ENCODE measurements at regions of chr2 and their contacts with region 1.

Region 1: DNA sequence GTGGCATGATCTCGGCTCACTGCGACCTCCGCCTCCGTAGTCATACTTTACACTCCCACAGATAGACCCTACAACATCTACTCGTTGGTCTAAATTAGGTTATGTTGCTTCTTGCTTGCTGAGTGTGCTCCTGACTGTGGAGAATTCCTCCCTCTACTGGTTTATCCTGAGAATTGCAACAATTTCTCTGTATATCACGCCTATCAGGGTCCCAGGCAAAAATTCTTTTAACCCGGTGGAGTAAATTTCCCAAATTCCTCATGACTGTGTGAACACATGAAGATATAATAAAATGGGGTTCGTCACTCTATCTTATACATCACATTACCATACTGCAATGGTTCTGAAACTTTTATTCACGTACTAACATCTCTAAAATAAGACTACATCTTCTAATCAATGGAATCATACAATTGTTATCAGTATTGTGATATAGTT is 156.7 kb downstream of the EVA1A start:
- DNase-seq: no peak
- ATAC-seq: peak; percentile 55 to 72
- H3K4me3 ChIP-seq: no peak overlapping the region
- H3K27ac ChIP-seq: no peak overlapping the region
- H3K4me1 ChIP-seq: no peaks in the 10 kb centered on the region
- H3K27me3 ChIP-seq: no peaks in the 10 kb centered on the region

Region 2: DNA sequence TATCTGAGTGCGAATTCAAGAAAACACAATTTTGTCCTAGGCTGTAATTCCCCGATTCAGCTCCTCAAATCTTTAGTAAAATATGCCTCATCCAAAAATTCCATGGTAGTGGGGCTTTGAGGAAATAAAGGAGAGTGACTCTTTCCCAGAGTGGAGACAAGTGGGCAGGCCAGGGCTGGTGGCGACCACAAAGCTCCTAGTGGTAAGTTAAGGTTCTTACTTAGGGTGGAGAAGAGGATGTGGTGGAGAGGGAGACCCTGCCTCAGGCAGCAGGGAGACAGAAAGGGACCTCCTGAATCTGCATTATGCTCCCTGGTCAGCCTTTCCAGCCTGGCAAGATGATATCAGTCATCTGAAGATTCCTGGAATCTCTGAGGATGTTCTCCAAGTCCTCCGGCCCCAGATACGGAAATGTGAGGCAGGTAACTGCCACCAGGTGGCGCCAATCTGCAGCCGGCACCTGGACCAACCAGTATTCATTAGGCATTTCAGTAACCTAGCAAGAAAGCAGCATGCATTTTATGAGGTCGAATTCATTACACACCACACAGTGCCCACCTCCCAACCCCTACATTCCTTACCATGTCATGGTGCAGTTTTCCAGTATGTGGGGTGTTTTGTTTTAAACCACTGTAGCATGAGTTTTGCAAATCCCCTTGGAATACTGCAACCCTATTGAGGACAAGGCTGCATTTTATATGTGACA is 339.2 kb before region 1 on chr2:
- intact Hi-C with region 1: loop called in 1 of 4 experiments (anchors 10 kb)
- DNase-seq: peak; percentile 44 to 81 (median 60)
- ATAC-seq: peak in 1 of 2 donors; percentile 50
- H3K4me3 ChIP-seq: no peak overlapping the region
- H3K27ac ChIP-seq: no peak overlapping the region
- H3K4me1 ChIP-seq: no peaks in the 10 kb centered on the region
- H3K27me3 ChIP-seq: no peaks in the 10 kb centered on the region

Measured in right cardiac atrium (tissue), 5 donors.